Right cardiac atrium (tissue), 5 donors: ENCODE measurements at regions of chr19 and their contacts with region 1.

Region 1: DNA sequence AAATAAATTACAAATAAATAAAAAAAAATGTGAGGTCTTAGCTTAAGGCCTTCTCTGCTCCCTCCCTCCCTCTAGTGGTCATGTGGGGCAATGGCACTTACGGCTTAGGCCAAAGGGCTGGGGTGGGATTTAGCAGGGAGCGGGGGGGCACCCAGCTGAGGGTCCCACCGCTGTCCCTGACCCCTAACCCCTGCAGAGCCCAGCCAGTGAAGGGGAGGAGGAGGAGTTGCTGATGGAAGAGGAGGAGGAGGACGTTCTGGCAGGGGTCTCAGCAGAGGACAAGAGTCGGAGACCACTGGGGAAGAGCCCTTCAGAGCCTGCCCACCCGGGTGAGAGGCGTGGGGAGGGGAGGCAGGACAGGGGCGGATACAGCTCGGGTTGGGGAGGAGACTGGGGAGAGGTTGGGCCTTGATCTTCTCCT is 9.3 kb downstream of the MPND start:
- DNase-seq: no peak
- ATAC-seq: peak; percentile 45 to 46
- H3K4me3 ChIP-seq: no peak overlapping the region
- H3K27ac ChIP-seq: no peak overlapping the region
- H3K4me1 ChIP-seq: no peaks in the 10 kb centered on the region
- H3K27me3 ChIP-seq: no peaks in the 10 kb centered on the region

Region 2: DNA sequence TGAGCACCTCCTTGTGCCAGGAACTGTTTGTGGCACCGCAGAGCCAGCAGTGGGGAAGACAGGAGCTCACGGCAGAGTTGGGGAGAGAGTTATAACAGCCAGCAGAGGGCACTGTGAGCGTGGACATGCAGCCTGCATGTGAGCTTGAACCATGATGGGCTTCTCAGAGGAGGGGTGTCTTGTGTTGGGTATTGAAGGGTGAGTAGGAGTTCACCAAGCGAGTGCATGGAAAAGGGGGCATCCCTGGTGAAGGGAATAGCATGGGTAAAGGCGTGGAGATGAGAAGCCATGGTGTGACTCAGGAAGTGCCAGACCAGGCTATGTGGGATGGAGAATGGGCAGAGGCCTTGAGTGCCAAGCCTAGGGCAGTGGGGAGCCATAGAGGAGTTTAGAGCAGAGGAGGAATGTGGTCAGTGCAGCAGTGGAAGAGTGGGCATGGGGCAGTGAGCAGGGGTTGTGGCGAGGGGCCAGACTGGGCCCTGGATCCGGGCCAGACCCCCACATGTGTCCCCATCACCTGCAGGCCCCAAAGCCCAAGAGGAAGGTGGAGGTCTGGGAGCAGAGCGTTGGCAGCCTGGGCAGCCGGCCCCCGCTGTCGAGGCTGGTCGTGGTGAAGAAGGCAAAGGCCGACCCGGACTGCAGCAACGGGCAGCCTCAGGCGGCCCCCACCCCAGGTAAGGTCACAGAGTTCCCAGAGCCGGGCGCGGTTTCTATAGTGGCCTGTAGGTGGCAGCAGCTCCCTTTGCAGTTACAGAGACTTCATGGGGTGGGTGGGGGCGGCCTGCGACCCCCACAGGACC is 85.4 kb before region 1 on chr19:
- intact Hi-C with region 1: loop called (anchors 5 to 10 kb)
- DNase-seq: peak; percentile 47 to 84 (median 79)
- ATAC-seq: peak; percentile 55 to 62
- H3K4me3 ChIP-seq: no peak overlapping the region
- H3K27ac ChIP-seq: no peak overlapping the region
- H3K4me1 ChIP-seq: no peaks in the 10 kb centered on the region
- H3K27me3 ChIP-seq: no peaks in the 10 kb centered on the region

Region 3: DNA sequence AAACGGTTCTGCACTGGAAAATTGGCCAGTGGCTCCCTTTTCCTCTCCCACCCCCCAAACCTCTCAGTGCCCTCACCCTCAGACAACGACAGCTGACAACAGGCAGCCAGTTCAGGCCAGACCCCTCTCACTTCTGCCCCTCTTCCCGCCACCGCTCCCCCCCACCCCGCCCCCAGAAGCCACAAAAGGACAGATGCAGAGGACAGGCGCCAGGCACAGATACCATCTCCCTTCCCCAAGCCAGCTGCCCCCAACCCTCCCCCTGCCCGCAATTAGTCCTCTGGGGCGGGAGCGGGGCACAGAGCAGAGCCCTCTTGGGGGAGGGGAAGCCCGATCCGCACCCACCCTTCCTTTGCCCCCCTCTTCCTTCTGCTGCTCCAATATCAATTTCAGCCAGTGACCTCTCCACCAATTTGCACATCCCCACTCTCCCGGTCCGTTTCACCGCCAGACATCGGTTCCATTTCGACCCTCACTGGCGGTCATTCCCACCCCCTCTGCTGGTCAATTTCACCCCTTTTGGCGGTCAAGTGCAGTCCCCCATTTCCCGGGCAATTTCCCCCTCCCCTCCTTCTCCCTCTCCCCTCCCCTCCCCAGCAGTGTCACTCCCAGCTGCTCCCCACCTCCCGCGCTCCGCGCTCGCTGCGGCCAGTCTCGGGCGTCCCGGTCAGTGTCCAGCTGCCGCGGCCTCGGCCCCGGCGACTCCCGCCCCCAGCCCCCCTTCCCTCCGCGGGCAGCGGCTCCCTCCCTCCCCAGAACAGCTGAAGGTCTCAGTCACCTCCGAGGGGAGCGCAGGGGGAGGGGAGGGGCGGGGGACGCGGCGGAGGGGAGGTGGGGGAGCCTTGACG is 74.1 kb before region 1 on chr19 and contains the start of gene SHD:
- intact Hi-C with region 1: loop called in 1 of 4 experiments (anchors 10 kb)
- DNase-seq: peak in 1 of 3 donors; percentile 73
- ATAC-seq: peak; percentile 35 to 62
- H3K4me3 ChIP-seq: peak within 1 kb of the TSS; percentile 86
- H3K27ac ChIP-seq: no peak within 1 kb of the TSS
- H3K4me1 ChIP-seq: peaks cover 2% of the 10 kb centered on the region
- H3K27me3 ChIP-seq: no peaks in the 10 kb centered on the region
- total RNA-seq, gene SHD: 30.5 to 75.1 (median 54.7) TPM